Activated T-helper 1 cell treated with anti-CD3 and anti-CD28 coated beads, Interleukin-12 subunit alpha, Interleukin-12 subunit beta, Interleukin-2, Interleukin-4 antibody, amounts not matched to agents 30 ng/mL and 10 ng/mL and 1 ng/mL, durations not matched to agents 14 hours and 24 hours and 36 hours (primary cell): ENCODE measurements at regions of chr12 and their contacts with region 1.

Region 1: GRCh38 chr12:12916135-12916944 is 25.0 kb downstream of the GPRC5A start:
- DNase-seq: peak; percentile 76
- H3K4me3 Mint-ChIP-seq: no peak overlapping the region
- H3K27ac Mint-ChIP-seq: no peak overlapping the region
- H3K4me1 Mint-ChIP-seq: peaks cover 11% of the 10 kb centered on the region
- H3K27me3 Mint-ChIP-seq: peaks cover 14% of the 10 kb centered on the region

Region 2: DNA sequence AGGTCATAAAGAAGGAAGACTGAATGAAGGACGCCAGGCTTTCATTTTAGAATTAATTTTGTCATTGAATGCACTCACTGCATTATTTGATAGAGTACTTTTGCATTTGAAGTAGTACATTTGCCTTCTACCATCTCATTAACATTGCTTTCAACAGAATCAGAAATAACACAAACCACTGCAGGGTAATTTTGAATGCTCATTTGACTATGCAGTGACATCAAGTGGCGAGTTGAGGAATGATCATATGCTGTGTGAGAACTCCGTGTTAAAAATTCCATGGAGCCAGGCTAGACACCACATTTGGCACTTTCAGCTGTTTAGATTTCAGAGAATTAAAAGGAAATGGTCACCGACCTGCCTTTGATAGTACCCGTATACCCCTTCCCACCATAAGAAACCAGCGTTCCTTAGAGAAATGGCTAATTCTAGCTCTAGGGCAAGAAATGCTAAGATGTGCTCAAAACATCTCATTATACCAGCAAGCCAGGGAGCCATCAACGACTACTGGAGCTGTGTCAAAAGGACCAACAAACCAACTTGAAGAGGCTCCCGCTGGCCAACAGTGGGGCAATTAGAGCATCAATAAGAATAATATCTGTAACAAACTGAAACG is 67.2 kb after region 1 on chr12:
- intact Hi-C with region 1: loop called (anchors 1 kb)
- DNase-seq: no peak
- H3K4me3 Mint-ChIP-seq: no peak overlapping the region
- H3K27ac Mint-ChIP-seq: no peak overlapping the region
- H3K4me1 Mint-ChIP-seq: no peaks in the 10 kb centered on the region
- H3K27me3 Mint-ChIP-seq: no peaks in the 10 kb centered on the region

Region 3: GRCh38 chr12:13233830-13234641 is 317.7 kb after region 1 on chr12:
- intact Hi-C with region 1: loop called (anchors 1 kb)
- DNase-seq: no peak
- H3K4me3 Mint-ChIP-seq: no peak overlapping the region
- H3K27ac Mint-ChIP-seq: no peak overlapping the region
- H3K4me1 Mint-ChIP-seq: no peaks in the 10 kb centered on the region
- H3K27me3 Mint-ChIP-seq: peaks cover 10% of the 10 kb centered on the region